ENCODE measurements at regions of chr9 and their contacts with region 1.

Region 1: GRCh38 chr9:96418074-96418809 is at the start of gene ZNF367:
- DNase-seq: peak; percentile 94
- H3K4me3 Mint-ChIP-seq: peak within 1 kb of the TSS; percentile 84
- H3K27ac Mint-ChIP-seq: peak within 1 kb of the TSS; percentile 91
- H3K4me1 Mint-ChIP-seq: peaks cover 40% of the 10 kb centered on the region
- H3K27me3 Mint-ChIP-seq: no peaks in the 10 kb centered on the region
- total RNA-seq, gene ZNF367: 35.8 to 36.1 TPM

Region 2: DNA sequence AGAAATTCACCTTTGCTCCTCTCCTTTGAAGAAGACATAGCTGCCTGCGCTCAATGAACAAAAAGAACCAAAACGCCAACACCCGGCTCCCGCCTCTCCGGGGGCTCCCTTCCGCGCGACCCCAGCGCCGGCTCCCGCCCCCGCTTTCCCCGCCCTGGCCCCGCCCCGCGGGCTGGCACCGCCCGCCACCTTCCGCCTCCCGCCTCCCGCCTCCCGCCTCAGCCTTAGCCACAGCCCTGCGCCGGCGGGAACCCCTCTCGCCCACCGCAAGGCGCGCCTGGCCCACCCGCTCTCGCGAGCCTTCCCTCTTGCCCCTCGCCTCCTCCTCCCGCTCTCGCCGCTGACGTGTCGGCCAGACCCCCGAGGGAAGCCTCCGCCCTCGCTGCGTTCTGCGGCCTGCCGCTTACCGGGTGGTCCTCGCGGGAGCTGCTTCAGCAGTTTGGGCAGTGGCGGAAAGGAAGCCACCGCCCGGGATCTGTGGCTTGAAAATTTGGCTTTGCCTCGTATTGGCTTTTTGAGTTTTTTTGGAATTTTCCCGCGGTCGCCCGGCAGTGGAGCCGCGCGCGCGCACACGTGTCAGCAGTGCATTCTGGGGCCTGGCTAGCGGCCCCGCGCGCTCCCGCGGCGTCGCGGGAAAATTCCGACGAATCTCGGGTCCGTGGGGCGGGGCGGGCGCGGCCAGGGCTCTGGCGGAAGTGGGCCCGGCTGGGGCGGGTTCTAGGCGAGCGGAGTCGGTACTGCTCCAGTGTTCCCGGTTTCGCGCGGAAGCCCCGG is 1100.9 kb before region 1 on chr9 and contains the start of gene FANCC:
- CTCF ChIA-PET with region 1: no interaction called
- intact Hi-C with region 1: loop called (anchors 1 kb)
- DNase-seq: peak; percentile 85
- H3K4me3 Mint-ChIP-seq: peak within 1 kb of the TSS; percentile 91
- H3K27ac Mint-ChIP-seq: peak within 1 kb of the TSS; percentile 93
- H3K4me1 Mint-ChIP-seq: peaks cover 18% of the 10 kb centered on the region
- H3K27me3 Mint-ChIP-seq: peaks cover 6% of the 10 kb centered on the region
- total RNA-seq, gene FANCC: 14.1 to 14.5 TPM

Region 3: DNA sequence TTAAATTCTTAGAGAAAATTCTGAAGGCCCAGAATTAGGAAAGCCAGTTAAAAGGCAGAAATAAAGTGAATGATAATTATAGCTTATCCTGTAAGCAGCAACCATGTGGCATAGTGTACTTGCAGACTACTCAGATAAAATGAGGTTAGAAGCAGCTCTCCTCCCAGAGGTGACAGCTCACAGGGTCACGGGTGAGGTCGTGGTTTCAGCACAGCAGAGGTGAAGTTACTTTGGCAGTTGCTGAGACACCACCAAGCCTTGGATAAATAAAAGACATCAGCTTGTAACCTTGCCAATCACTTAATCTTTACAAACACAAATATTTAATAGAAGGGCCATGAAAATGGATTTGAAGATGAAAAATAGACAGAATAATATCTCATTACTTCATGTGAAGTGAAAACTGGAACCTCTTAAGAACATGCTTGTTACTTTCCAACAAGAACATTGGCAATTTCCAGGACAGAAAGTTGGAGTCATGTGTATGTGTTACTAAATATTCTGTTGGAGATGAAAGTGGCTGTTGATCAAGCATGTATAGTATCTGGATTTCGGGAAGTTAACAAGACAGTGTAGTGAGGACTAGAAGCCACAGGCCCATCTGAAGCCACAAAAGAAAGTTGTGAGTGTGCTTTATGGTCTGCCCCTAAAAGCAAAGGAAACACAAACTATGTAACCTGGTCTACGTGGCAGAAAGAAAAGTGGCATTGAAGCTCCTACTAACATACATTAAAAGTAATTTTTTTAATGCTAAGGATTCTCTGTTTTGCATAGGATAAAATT is 408.4 kb before region 1 on chr9:
- CTCF ChIA-PET with region 1: no interaction called
- intact Hi-C with region 1: loop called (anchors 5 kb)
- DNase-seq: peak; percentile 83
- H3K4me3 Mint-ChIP-seq: no peak overlapping the region
- H3K27ac Mint-ChIP-seq: peak overlapping the region; percentile 73
- H3K4me1 Mint-ChIP-seq: peaks cover 54% of the 10 kb centered on the region
- H3K27me3 Mint-ChIP-seq: no peaks in the 10 kb centered on the region

Region 4: GRCh38 chr9:96383165-96383942 is 34.9 kb before region 1 on chr9 and contains the start of gene SLC35D2:
- CTCF ChIA-PET with region 1: no interaction called
- intact Hi-C with region 1: loop called (anchors 2 kb)
- DNase-seq: peak; percentile 7
- H3K4me3 Mint-ChIP-seq: peak within 1 kb of the TSS; percentile 62
- H3K27ac Mint-ChIP-seq: no peak within 1 kb of the TSS
- H3K4me1 Mint-ChIP-seq: peaks cover 20% of the 10 kb centered on the region
- H3K27me3 Mint-ChIP-seq: no peaks in the 10 kb centered on the region
- total RNA-seq, gene SLC35D2: 0.91 to 1.1 TPM

Region 5: GRCh38 chr9:96478829-96479371 is 60.7 kb after region 1 on chr9:
- CTCF ChIA-PET with region 1: no interaction called
- intact Hi-C with region 1: loop called (anchors 2 kb)
- DNase-seq: peak; percentile 60
- H3K4me3 Mint-ChIP-seq: no peak overlapping the region
- H3K27ac Mint-ChIP-seq: peak overlapping the region; percentile 88
- H3K4me1 Mint-ChIP-seq: peaks cover 33% of the 10 kb centered on the region
- H3K27me3 Mint-ChIP-seq: no peaks in the 10 kb centered on the region

Region 6: GRCh38 chr9:96654443-96655197 is 236.4 kb after region 1 on chr9:
- CTCF ChIA-PET with region 1: no interaction called
- intact Hi-C with region 1: loop called (anchors 1 kb)
- DNase-seq: peak; percentile 65
- H3K4me3 Mint-ChIP-seq: peak overlapping the region; percentile 73
- H3K27ac Mint-ChIP-seq: peak overlapping the region; percentile 15
- H3K4me1 Mint-ChIP-seq: peaks cover 9% of the 10 kb centered on the region
- H3K27me3 Mint-ChIP-seq: no peaks in the 10 kb centered on the region

Region 7: GRCh38 chr9:97062417-97062985 is 644.3 kb after region 1 on chr9:
- CTCF ChIA-PET with region 1: no interaction called
- intact Hi-C with region 1: loop called (anchors 1 kb)
- DNase-seq: peak; percentile 82
- H3K4me3 Mint-ChIP-seq: no peak overlapping the region
- H3K27ac Mint-ChIP-seq: peak overlapping the region; percentile 85
- H3K4me1 Mint-ChIP-seq: peaks cover 15% of the 10 kb centered on the region
- H3K27me3 Mint-ChIP-seq: peaks cover 7% of the 10 kb centered on the region